Calu3 (cell line): ENCODE measurements at regions of chr2 and their contacts with region 1.

Region 1: GRCh38 chr2:182767578-182767977 is 51.5 kb downstream of the DNAJC10 start:
- DNase-seq: no peak
- H3K4me3 Mint-ChIP-seq: no peak overlapping the region
- H3K27ac Mint-ChIP-seq: no peak overlapping the region
- H3K4me1 Mint-ChIP-seq: no peaks in the 10 kb centered on the region
- H3K27me3 Mint-ChIP-seq: no peaks in the 10 kb centered on the region
- CTCF ChIP-seq: peak; percentile 37

Region 2: GRCh38 chr2:182593394-182593975 is 174.1 kb before region 1 on chr2:
- CTCF ChIA-PET with region 1: no interaction called
- intact Hi-C with region 1: no loop called
- DNase-seq: no peak
- H3K4me3 Mint-ChIP-seq: no peak overlapping the region
- H3K27ac Mint-ChIP-seq: no peak overlapping the region
- H3K4me1 Mint-ChIP-seq: no peaks in the 10 kb centered on the region
- H3K27me3 Mint-ChIP-seq: no peaks in the 10 kb centered on the region
- CTCF ChIP-seq: no peak

Region 3: GRCh38 chr2:182754231-182754630 is 13.3 kb before region 1 on chr2:
- CTCF ChIA-PET with region 1: interaction called, 10 read pairs
- intact Hi-C with region 1: no loop called
- DNase-seq: no peak
- H3K4me3 Mint-ChIP-seq: no peak overlapping the region
- H3K27ac Mint-ChIP-seq: no peak overlapping the region
- H3K4me1 Mint-ChIP-seq: peaks cover 2% of the 10 kb centered on the region
- H3K27me3 Mint-ChIP-seq: no peaks in the 10 kb centered on the region
- CTCF ChIP-seq: no peak

Region 4: DNA sequence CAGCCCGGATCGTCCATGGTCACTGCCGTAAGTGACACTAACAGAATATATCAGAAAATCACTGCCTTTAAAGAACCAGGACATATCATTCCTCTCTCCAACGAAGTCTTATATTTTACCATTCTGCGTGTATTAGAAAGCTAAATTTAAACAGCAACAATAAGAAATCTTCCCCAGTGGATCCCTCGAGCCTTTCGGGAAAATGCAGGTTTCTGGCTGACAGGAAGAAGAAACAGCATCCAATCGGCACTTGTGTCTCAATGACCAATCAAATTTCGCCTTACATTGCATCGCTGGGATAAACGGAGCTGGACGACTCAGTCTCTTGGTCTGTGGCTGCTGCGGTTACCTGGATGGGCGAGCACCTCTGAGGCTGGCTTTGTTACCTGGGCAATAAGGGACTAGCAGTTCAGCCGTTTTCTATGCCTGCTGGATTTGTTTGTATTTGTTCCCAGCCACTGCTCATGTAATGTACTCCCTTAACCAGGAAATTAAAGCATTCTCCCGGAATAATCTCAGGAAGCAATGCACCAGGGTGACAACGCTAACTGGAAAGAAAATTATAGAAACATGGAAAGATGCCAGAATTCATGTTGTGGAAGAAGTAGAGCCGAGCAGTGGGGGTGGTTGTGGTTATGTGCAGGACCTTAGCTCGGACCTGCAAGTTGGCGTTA is 311.0 kb after region 1 on chr2 and contains the start of gene DUSP19:
- CTCF ChIA-PET with region 1: no interaction called
- intact Hi-C with region 1: no loop called
- DNase-seq: peak; percentile 94
- H3K4me3 Mint-ChIP-seq: peak within 1 kb of the TSS; percentile 83
- H3K27ac Mint-ChIP-seq: peak within 1 kb of the TSS; percentile 85
- H3K4me1 Mint-ChIP-seq: no peaks in the 10 kb centered on the region
- H3K27me3 Mint-ChIP-seq: no peaks in the 10 kb centered on the region
- CTCF ChIP-seq: no peak
- total RNA-seq, gene DUSP19: 1.6 and 2.7 TPM in 2 replicates

Region 5: GRCh38 chr2:183881978-183882377 is 1114.4 kb after region 1 on chr2:
- CTCF ChIA-PET with region 1: no interaction called
- intact Hi-C with region 1: no loop called
- DNase-seq: no peak
- H3K4me3 Mint-ChIP-seq: no peak overlapping the region
- H3K27ac Mint-ChIP-seq: no peak overlapping the region
- H3K4me1 Mint-ChIP-seq: no peaks in the 10 kb centered on the region
- H3K27me3 Mint-ChIP-seq: no peaks in the 10 kb centered on the region
- CTCF ChIP-seq: no peak